ENCODE measurements at regions of chr1 and their contacts with region 1.

Region 1: DNA sequence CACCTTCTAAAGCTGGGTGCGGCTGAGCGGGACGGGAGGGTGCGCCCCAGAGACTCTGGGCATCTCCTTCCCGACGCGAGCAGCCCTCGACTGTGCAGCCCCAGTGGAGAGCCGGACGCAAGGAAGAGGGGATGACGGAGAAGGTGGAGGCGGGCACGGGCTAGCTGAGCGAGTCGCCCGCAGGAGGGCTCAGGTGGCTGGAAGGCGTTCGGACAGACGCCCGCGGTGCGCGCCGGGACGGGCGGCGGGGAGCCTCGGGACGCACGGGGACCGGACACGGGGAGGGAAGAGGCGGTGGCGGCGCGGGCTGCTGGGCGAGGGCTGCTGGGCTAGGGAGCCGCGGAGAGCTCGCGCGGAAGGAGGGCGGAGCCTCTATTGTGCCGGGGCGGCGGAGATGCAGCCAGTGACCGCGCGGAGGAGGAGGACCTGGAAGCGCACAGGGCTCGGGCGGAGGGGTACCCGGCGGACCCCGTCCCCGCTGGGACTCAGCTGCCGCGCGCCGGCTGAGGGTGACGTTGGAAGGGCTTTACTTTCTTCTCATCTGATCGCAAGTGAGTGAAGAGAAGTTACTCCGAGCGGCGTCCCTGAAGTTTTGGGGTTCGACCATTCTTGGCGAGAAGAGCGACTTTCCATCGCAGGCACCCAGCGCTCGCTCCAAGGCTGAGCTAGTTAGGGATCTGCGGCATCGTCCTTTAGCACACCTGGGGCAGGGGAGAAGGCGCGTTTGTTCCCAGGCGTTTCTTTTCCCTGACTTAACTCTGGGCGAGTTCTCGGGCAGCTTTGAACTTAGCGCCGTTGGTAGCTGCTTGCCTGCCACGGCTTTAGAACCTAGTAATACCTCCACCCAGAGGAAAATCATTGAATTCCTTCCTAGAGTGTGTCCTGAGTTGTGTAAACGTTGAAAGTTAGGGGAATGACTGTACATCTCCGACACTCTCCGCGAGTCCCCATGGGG is at the start of gene OLFML2B:
- DNase-seq: peak; percentile 58
- CTCF ChIP-seq: no peak

Region 2: GRCh38 chr1:161781995-161782394 is 241.8 kb before region 1 on chr1:
- in situ Hi-C with region 1: loop called (anchors 10 kb)
- DNase-seq: no peak
- CTCF ChIP-seq: no peak

Region 3: DNA sequence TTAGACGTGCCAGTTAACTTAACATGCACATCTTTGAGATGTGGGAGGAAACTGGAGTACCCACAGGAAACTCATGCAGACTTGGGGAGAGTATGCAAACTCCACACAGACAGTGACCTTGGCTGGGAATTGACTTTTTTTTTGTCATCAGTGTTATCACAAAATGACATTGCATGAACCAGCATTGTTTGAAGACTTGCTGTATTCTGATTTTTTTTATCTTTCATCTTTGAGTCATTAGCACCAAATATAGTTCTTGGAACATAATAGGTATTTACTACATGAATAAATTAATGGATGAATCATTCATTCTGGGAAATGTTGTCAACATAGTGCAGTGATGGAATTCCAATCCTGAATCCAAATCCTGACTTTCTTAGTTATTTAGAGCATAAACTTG is 180.7 kb before region 1 on chr1:
- in situ Hi-C with region 1: no loop called
- DNase-seq: no peak
- CTCF ChIP-seq: no peak

Region 4: GRCh38 chr1:162074276-162075005 is 50.6 kb after region 1 on chr1:
- in situ Hi-C with region 1: no loop called
- DNase-seq: no peak
- CTCF ChIP-seq: no peak